ENCODE measurements at regions of chr15 and their contacts with region 1.

Region 1: DNA sequence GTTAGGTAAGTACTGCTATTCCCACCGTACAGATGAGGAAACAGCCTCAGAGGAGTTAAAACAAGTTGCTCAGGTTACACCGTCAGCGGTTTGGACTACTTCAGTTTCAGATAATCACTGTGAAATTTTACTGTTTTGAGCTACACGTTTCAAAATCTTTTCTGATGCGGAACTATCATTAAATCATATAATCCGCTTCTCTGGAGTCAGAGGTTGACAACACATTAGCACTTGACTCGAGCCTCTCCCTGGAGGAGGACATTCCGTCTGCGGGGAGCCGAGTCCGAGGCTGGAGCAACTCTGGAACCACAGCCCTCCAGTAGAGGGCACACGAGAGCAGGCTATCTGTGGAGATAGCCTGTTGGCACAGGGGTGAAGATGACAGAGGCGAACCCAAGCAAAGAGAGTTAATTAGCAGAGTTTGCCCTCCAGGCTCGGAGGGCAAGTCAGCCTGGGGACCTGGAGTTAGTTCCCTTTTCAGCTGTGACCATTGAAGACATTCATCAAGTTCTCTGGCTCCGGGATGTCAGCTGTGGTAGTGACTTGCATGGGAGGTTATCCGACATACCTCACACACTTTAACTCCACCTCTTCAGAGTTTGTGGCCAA is 131.2 kb downstream of the IGF1R start:
- DNase-seq: peak; percentile 72
- CTCF ChIP-seq: peak; percentile 96

Region 2: DNA sequence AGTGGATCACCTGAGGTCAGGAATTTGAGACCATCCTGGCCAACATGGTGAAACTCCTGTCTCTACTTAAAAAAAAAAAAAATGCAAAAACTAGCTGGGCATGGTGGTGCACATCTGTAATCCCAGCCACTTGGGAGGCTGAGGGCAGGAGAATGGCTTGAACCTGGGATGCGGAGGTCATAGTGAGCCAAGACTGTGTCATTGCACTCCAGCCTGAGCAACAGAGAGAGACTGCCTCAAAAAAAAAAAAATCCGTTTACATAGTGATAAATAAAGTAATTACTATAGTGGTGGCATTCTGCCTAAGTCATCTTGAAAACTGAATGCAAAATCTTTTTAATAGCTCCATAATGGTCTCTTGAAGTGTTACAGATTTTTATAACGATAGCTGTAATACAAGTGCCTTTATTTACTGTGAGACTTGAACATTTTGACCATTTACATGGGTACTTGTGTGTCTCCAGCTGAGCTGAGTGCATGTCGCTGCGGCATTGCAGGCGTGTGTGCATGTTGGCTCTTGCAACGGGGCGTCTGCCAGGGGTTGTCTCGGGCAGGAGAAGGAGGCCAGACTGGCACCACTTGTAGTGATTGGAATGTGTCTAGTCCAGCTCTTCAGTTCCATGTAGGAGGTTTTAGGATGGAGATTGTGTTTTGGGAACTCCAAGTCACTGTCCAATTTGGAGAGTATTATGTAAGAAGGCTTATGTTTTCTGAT is 19.3 kb before region 1 on chr15:
- CTCF ChIA-PET with region 1: interaction called, 32 read pairs
- POLR2A ChIA-PET with region 1: no interaction called
- DNase-seq: no peak
- CTCF ChIP-seq: no peak

Region 3: GRCh38 chr15:98791047-98791701 is 11.6 kb after region 1 on chr15:
- CTCF ChIA-PET with region 1: interaction called, 19 read pairs
- POLR2A ChIA-PET with region 1: no interaction called
- DNase-seq: no peak
- CTCF ChIP-seq: no peak

Region 4: DNA sequence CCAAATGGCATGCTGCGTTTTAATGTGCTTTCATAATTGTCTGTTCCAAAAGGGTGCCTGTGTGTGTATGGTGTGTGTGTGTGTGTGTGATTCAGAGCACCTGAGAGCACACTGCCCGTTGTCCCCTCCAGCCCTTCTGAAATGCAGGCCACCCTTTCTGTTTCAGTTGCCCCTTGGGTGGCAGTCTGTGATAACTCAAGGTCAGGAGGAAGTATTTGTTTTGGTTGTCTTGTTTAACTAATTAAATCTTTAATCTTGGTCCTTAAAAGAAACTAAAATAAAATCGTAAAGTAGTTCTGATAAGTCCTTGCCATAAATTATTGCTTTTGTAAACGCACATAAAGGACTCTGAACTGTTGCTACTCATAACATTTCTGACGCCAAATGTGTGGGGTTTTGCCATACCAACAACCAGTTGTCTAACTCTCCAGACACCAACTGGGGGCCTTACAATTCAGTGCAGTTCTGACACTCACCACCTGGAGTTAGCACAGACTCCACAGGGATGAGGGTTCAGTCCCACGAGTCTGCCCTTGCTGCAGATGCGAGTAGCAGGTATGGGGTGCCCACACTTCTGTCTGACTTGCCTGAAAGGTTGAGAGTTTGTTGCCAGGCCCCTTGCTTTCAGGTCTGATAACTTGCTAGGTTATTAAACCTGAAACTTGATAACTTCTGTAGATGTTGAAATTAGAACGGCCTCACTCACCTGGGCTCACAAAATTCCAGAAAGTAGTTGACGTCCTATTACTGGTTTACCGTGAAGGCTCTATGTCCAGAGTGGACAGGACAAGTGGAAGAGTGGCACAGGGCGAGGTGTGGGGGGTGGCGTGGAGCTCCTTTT is 26.1 kb after region 1 on chr15:
- CTCF ChIA-PET with region 1: interaction called, 14 read pairs
- POLR2A ChIA-PET with region 1: no interaction called
- DNase-seq: no peak
- CTCF ChIP-seq: no peak

Region 5: DNA sequence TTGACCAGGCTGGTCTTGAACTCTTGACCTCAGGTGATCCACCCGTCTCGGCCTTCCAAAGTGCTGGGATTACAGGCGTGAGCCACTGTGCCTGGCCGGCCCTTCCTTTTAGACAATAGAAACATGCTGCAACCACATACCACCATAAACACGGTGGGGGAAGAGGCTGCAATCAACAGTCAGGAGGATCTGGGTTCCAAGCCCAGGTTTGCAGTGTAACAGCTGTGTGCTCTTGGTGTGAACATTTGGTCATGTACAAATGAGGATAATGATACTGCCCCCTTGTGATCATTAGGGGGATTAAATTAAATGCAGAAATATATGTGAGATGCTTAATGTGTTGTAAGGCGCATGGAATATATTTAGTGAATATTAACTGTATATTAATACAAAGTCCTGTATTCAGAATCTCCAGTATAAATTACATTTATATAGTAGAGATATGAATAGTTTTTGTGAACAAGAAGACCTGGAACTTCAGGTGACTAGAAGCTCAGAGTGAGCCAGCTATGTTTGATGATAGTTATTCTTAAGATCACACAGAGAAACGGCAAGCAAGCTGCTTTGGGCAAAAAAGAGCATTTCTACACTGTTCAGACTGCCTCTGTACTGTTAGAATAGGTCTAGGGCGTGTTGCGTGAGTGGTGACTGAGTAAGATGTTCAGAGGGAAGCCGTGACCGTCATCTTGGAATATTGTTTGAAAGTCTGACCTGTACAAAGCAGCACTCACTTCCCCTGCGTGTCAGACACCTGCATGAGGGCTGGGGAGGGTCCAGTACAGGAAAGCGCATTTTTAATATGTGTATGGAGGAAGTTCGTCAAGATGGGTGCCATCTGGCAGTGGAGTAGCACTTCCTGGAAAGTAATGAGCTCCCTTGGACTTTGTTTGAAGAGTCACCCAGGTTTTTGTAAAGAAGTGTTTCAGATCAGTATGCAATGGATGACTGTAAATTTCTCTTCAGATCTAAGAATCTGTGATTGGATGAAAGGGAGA is 102.3 kb after region 1 on chr15:
- CTCF ChIA-PET with region 1: interaction called, 36 read pairs
- POLR2A ChIA-PET with region 1: no interaction called
- DNase-seq: peak; percentile 58
- CTCF ChIP-seq: peak; percentile 52

Region 6: DNA sequence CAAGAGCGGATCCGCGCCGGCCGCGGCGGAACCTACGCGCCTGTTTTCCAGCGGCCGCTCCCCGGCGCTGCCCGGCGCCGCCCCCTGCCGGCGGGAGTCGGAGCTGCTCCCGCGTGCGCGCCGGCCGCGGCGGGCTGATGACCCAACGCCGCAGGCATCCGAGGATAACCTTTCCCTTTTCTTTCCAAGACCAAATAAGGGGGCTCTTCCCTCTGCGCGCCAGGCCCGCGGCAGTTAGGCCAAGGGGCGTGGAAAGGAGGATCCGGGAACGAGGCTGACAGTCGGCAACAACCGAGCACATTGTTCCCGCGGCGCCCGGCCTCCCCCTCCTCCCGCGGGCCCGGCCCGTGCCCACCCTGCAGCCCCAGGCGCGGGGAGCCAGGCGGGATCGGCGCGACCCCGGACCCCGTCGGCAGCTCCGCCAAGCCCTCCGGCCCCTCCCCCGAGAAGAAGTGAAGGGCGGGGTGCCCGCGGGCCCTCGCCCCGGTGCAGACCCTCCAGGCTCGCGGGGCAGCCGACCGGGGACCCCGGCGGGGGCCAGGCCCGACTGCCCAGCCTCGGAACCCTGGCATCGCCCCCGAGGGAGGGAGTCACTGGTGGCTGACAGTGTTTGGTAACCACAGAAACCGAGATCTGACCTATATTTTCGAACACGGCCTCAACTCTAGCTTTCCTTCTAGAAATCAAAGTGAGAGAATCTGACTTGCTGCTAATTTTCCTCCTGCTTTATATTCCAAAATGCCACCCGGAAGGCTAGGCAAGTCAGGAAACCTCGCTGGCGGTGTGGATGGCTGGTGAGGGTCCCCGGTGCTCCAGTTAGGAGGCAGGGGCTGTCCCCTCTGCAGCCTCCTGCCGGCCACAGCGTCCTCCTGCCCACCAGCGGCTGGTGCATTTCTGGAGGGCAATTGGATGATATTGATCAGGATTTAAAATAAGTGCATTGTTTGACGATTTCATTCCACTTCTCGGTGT is 279.7 kb after region 1 on chr15:
- CTCF ChIA-PET with region 1: interaction called, 19 read pairs
- POLR2A ChIA-PET with region 1: no interaction called
- DNase-seq: peak; percentile 85
- CTCF ChIP-seq: peak; percentile 93